Heart left ventricle (tissue), 16 donors: ENCODE measurements at regions of chr22 and their contacts with region 1.

Region 1: DNA sequence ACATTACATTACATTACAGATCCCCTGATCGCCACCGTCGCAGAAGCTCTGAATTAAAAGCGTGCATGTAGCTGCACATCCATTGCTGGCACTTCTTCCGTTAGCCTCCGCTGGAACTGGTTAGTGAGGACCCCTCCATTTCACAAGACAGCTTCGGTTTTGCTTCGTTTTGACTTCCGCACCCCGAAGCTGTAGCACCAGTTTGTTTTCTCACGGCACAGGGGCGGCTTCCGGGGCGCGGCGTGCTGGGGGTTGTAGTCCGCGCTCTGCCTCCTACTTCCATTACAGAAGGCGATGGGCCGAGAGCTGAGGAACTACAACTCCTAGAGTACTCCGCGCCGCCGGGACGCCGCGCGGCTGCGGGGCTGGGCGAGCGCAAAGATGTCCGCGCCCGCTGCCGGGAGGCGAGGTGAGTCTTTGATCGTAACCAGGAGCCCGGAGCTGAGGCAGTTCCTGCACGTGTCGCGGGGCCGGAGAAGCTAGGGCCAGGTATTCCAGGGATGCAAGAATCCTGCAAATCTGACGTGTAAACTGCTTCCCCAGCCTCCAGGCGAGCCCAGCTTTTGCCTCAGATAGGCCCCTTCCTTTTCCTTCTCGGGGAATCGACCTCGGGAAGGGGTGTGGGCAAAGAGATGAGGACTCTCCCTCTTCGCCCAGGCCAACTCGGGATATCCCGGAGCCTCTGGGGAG is at the start of gene PEX26:
- DNase-seq: peak; percentile 95 to 97 (median 95)
- ATAC-seq: peak; percentile 96 to 99 (median 98)
- H3K4me3 ChIP-seq: peak within 1 kb of the TSS; percentile 66 to 99 (median 88)
- H3K27ac ChIP-seq: peak within 1 kb of the TSS; percentile 27 to 90 (median 87)
- H3K4me1 ChIP-seq: peaks cover 3 to 37% (median 26%) of the 10 kb centered on the region in 12 donors
- H3K27me3 ChIP-seq: no peaks in the 10 kb centered on the region
- CTCF ChIP-seq: no peak
- POLR2A ChIP-seq: peak in 1 of 2 donors; percentile 63
- total RNA-seq, gene PEX26: 15.8 to 27.3 (median 22.0) TPM

Region 2: DNA sequence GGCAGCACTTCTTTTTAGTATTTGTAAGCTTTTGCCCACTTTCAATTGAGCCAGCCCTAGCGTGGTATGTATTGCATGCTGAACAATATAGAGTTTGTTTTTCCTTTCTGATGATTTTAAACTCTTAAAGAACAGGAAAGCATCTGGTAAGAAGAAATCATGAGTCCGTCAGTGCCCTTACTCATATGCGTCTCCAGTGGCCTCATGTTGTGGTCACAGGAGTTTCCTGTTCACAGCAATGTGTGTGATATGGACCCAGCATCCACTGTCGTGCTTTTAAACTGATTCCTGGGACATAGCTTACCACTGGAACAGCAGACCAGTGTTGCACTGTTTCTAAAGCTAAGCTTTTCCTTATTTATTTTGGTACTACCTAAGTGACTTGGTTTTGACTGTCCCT is 343.6 kb before region 1 on chr22:
- intact Hi-C with region 1: loop called in 1 of 10 experiments (anchors 10 kb)
- DNase-seq: no peak
- ATAC-seq: no peak
- H3K4me3 ChIP-seq: no peak overlapping the region
- H3K27ac ChIP-seq: peak overlapping the region in 1 of 12 donors; percentile 4
- H3K4me1 ChIP-seq: no peaks in the 10 kb centered on the region
- H3K27me3 ChIP-seq: no peaks in the 10 kb centered on the region
- CTCF ChIP-seq: no peak
- POLR2A ChIP-seq: no peak

Region 3: GRCh38 chr22:17830043-17830961 is 247.5 kb before region 1 on chr22:
- intact Hi-C with region 1: loop called (anchors 1 to 2 kb)
- DNase-seq: peak; percentile 83 to 87 (median 85)
- ATAC-seq: peak; percentile 69 to 81 (median 74)
- H3K4me3 ChIP-seq: no peak overlapping the region
- H3K27ac ChIP-seq: peak overlapping the region in 8 of 12 donors; percentile 49 to 79 (median 66)
- H3K4me1 ChIP-seq: peaks cover 4 to 63% (median 28%) of the 10 kb centered on the region in 12 donors
- H3K27me3 ChIP-seq: no peaks in the 10 kb centered on the region
- CTCF ChIP-seq: peak; percentile 95 to 100 (median 99)
- POLR2A ChIP-seq: no peak

Region 4: GRCh38 chr22:17903564-17904295 is 174.1 kb before region 1 on chr22:
- intact Hi-C with region 1: loop called in 5 of 10 experiments (anchors 5 to 10 kb)
- DNase-seq: peak in 2 of 5 donors; percentile 56 to 59
- ATAC-seq: peak; percentile 47 to 64 (median 60)
- H3K4me3 ChIP-seq: no peak overlapping the region
- H3K27ac ChIP-seq: peak overlapping the region in 10 of 12 donors; percentile 24 to 92 (median 54)
- H3K4me1 ChIP-seq: peaks cover 0 to 57% (median 25%) of the 10 kb centered on the region in 12 donors
- H3K27me3 ChIP-seq: no peaks in the 10 kb centered on the region
- CTCF ChIP-seq: no peak
- POLR2A ChIP-seq: no peak

Region 5: DNA sequence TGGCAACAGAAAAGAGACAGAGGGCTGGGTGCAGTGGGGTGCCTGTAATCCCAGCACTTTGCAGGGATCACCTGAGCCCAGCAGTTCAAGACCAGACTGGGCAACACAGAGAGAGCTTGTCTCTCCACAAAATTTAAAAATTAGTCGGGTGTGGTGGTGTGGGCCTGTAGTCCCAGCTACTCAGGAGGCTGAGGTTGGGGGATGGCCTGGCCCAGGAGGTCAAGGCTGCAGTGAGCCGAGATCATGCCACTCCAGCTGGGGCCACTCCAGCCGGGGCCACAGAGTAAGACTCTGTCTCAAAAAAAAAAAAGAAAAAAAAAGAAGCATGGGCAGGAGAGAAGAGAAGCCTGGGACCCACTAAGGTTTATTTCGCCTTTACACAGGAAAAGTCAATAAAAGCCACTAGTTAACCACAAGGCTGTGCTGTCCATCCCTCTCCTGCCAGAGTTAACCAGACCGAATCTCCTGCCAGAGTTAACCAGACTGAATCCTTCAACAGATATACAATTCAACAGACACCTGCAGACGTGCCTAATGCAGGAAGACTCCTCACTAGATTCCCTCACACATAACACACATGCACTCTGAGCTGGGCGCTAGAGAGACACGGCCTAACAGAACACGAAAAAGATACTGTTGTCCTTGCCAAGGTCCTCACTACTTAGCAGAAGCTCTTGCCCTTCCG is 83.2 kb before region 1 on chr22:
- intact Hi-C with region 1: loop called in 1 of 10 experiments (anchors 5 kb)
- DNase-seq: no peak
- ATAC-seq: no peak
- H3K4me3 ChIP-seq: no peak overlapping the region
- H3K27ac ChIP-seq: peak overlapping the region in 1 of 12 donors; percentile 50
- H3K4me1 ChIP-seq: peaks cover 0 to 66% (median 41%) of the 10 kb centered on the region in 12 donors
- H3K27me3 ChIP-seq: no peaks in the 10 kb centered on the region
- CTCF ChIP-seq: no peak
- POLR2A ChIP-seq: no peak

Region 6: GRCh38 chr22:18012531-18012930 is 65.3 kb before region 1 on chr22:
- intact Hi-C with region 1: no loop called
- DNase-seq: no peak
- ATAC-seq: no peak
- H3K4me3 ChIP-seq: no peak overlapping the region
- H3K27ac ChIP-seq: no peak overlapping the region
- H3K4me1 ChIP-seq: peaks cover 0 to 10% (median 0%) of the 10 kb centered on the region in 12 donors
- H3K27me3 ChIP-seq: no peaks in the 10 kb centered on the region
- CTCF ChIP-seq: no peak
- POLR2A ChIP-seq: no peak

Region 7: DNA sequence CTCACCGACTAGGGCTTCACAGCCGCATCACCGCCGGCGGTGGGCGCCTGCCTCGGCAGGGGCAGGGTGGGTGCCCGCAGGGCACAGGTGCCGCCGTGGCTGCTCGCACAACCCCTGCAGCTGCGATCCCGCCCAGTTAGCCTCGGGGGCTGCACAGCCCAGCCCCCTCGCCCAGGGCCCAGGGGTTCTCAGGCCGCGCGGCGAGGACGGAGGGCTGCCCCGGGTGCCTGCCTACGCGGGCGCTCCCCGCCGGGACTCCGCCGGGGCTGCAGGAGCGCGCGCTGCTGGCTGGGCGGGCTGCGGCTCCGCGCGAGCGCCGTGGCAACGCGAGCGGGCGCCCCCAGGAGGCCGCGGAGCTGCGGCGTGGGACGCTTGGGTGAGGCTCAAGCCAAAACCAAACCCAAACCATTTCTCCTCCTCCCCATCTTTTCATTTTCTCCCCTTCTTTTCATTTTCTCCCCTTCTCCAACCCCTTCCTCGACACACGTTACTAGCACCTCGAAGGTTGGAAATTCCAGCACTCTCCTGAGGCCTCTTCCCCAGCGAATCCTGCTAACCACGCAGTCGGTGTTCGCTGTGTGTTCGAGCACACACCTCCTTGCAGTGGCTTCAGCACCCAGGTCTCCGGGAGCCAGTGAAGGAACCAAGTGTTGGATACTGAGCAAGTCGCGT is 53.4 kb before region 1 on chr22 and contains the start of gene MICAL3:
- intact Hi-C with region 1: loop called in 3 of 10 experiments (anchors 10 kb)
- DNase-seq: peak; percentile 54 to 78 (median 68)
- ATAC-seq: peak in 3 of 4 donors; percentile 66 to 91 (median 87)
- H3K4me3 ChIP-seq: peak within 1 kb of the TSS; percentile 56 to 92 (median 72)
- H3K27ac ChIP-seq: peak within 1 kb of the TSS; percentile 22 to 91 (median 86)
- H3K4me1 ChIP-seq: peaks cover 0 to 35% (median 11%) of the 10 kb centered on the region in 12 donors
- H3K27me3 ChIP-seq: peaks cover 0 to 32% (median 0%) of the 10 kb centered on the region in 9 donors
- CTCF ChIP-seq: peak; percentile 27 to 80 (median 64)
- POLR2A ChIP-seq: peak in 1 of 2 donors; percentile 19
- total RNA-seq, gene MICAL3: 41.3 to 125 (median 101) TPM